Vagina (tissue), 2 donors: ENCODE measurements at regions of chr1 and their contacts with region 1.

Region 1: DNA sequence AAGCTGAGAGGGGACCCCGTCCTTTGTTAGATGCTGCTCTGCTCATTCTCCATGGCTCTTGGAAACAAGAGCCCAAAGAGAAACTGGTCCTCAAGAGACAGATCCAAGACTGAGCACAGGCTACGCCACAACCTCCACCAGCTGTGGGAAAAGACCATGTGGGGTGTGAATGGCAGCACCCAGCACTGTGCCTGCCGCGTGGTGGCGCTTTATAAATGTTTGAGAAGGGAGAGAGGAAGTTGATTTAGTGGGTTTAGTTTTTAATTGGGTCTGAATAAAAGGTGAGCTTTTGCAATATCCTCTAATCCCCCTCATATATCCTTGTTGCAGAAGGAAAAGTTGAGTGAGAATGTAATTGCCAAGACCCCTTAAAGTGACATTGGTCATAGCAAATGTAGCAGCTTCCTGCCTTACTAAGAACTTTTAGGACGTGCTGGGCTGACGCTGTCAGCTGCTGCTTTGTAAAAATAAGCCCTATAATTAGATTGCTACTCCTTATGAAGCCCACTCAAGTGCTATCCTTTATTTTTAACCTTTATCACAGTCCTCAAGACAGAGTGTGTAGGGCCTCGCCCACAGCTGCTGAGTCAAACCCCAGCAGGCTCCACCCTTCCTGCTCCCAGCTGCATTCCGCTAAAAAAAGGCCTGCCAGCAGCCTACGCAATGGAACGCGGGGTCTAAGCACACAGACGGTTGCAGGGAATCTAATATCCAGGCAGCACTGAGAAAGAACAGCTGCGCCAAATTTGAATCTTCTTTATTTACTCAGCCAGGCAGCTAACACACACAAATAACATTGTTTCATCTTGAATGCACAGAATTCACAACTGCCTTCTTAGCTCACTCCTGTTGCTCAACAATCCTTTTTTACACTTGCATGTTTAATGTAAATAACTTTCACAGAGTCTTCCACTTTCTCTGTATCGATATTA is 47.4 kb upstream of the PRDX6 start:
- DNase-seq: peak in 1 of 2 donors; percentile 91
- H3K4me3 ChIP-seq: peak overlapping the region; percentile 1 to 19
- H3K27ac ChIP-seq: peak overlapping the region; percentile 85
- H3K4me1 ChIP-seq: peaks cover 28% of the 10 kb centered on the region
- H3K27me3 ChIP-seq: no peaks in the 10 kb centered on the region
- CTCF ChIP-seq: peak in 2 of 3 experiments; percentile 15 to 37
- POLR2A ChIP-seq: no peak

Region 2: DNA sequence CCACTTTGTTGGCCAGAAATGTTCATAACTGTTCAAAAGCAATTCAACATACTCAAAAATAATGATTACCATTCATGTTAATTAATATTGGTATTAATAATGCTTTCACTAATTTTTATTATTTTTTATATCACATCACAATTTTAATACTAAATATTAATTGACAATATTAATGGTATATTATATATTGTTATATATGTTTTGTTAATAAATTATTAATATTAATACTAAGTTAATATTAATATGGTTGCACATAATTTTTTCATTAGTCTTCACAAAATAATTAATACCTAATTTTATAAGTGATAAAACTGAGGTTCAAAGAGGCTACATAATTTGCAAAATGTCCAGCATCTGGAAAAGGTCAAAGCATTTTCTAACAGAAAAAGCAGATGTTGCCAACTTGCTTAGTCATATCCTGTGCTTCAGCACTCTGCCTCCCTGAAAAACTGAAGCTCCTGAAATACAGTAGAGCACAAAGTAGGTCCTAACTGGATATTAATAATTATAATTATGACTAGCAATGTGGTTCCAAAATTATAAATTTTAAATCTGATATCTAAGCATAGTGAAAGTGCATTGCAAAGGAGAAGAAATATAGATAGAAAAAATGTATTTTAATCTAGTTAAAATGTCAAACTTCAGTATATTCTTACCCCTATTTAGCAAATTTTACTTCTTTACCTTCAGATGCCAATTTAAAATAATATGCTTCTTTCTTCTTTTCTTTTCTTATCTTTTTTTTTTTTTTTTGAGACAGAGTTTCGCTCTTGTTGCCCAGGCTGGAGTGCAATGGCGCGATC is 99.4 kb before region 1 on chr1:
- intact Hi-C with region 1: no loop called
- DNase-seq: no peak
- H3K4me3 ChIP-seq: no peak overlapping the region
- H3K27ac ChIP-seq: no peak overlapping the region
- H3K4me1 ChIP-seq: no peaks in the 10 kb centered on the region
- H3K27me3 ChIP-seq: no peaks in the 10 kb centered on the region
- CTCF ChIP-seq: no peak
- POLR2A ChIP-seq: no peak

Region 3: GRCh38 chr1:173824331-173825081 is 394.8 kb after region 1 on chr1 and contains the starts of genes CENPL and DARS2:
- intact Hi-C with region 1: loop called (anchors 10 kb)
- DNase-seq: peak; percentile 96 to 98
- H3K4me3 ChIP-seq: peak within 1 kb of the TSS; percentile 60 to 81
- H3K27ac ChIP-seq: peak within 1 kb of the TSS; percentile 87
- H3K4me1 ChIP-seq: peaks cover 15% of the 10 kb centered on the region
- H3K27me3 ChIP-seq: no peaks in the 10 kb centered on the region
- CTCF ChIP-seq: peak in 1 of 3 experiments; percentile 20
- POLR2A ChIP-seq: peak in 1 of 2 donors; percentile 17
- total RNA-seq, gene CENPL: 3.7 TPM
- total RNA-seq, gene DARS2: 6.4 TPM